ENCODE measurements at regions of chr19 and their contacts with region 1.

Region 1: DNA sequence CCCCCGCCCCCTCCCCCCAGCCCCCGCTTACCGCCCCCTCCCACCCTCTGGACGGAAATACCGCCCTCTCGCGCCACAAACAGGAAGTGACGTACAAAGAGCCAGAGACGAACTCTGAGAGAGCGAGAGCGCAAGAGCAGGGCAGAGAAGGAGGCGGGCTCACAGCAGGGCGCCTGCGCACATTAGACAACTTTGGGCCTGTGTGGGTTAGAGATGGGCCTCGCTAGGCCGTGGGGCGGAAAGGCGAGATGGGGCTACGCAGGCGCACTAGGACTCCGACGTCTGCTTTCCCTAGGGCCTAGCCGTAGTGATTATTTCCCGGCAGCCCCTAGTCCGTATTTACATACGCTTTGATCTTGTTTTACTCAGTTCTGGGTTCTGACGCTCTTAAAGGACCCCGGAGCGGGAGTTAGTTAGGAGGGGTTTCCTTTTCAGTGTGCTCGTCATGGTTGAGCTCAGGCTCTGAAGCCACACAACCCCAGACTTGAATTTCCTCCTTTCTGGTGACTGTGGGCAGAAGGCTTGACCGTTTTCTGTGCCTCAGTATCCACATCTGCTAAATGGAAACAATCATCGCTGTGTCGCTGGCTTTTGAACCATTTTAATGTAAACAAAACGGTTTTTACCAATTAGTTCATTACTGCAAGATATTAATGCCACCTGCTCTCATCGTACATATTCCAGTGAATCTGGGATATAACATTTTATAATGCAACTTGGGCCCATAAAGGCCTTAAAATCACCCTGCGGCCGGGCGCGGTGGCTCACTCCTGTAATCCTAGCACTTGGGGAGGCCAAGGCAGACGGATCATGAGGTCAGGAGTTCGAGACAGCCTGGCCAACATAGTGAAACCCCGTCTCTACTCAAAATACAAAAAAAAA is 449 bp upstream of the AKT2 start:
- DNase-seq: peak; percentile 99
- ATAC-seq: peak; percentile 84
- H3K4me3 Mint-ChIP-seq: peak overlapping the region; percentile 98
- H3K27ac Mint-ChIP-seq: peak overlapping the region; percentile 99
- H3K4me1 Mint-ChIP-seq: peaks cover 43% of the 10 kb centered on the region
- H3K27me3 Mint-ChIP-seq: no peaks in the 10 kb centered on the region
- CTCF ChIP-seq: no peak

Region 2: DNA sequence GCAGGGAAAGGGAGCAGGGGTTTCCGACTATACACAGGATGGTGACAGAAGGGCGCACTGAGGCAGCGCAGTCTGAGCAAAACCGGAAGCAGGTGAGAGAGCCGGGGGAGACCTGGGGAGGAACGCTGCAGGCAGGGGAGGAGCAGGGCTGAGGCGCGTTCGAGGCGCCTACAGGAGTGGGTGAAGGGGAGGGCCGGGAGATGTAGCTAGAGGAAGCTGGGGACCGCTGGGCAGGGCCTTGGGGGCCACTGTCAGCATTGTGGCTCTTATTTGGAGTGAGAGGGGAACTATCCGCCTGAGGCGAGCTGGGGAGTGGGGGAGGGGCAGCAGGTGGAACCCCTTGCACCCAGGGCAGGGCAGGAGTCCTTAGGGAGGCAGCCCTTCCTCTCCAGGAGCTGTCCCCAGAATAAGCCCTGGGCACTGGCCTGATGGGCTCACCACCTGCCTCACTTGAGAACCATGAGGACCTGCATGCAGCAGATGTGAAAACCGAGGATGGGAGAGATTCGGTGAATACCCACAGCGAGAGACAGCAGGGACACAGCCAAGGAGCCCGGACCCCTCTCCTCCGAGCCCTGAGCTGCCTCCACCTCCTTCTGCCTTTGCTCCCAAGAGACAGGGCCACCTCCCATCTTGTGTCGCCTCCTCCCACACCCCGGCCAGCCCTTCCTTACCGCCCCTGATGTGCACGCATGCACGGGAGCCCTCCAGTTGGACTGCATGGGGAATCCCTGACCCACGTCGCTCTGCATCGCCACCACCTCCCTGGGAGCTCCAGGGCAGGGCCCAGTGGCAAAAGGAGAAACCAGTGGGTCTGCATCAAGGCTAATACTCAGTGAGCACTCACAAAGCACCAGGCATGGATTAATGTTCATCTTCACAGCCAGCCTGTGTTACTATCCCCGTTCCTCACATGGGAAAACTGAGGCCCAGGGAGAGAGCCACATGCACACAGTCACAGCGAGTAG is 10.7 kb before region 1 on chr19:
- CTCF ChIA-PET with region 1: interaction called, 3 read pairs
- POLR2A ChIA-PET with region 1: interaction called, 13 read pairs
- intact Hi-C with region 1: no loop called
- DNase-seq: peak; percentile 69
- ATAC-seq: peak; percentile 93
- H3K4me3 Mint-ChIP-seq: peak overlapping the region; percentile 41
- H3K27ac Mint-ChIP-seq: peak overlapping the region; percentile 77
- H3K4me1 Mint-ChIP-seq: peaks cover 66% of the 10 kb centered on the region
- H3K27me3 Mint-ChIP-seq: no peaks in the 10 kb centered on the region
- CTCF ChIP-seq: no peak

Region 3: GRCh38 chr19:40312533-40312932 is 26.9 kb after region 1 on chr19:
- CTCF ChIA-PET with region 1: no interaction called
- POLR2A ChIA-PET with region 1: no interaction called
- intact Hi-C with region 1: no loop called
- DNase-seq: peak; percentile 4
- ATAC-seq: no peak
- H3K4me3 Mint-ChIP-seq: no peak overlapping the region
- H3K27ac Mint-ChIP-seq: no peak overlapping the region
- H3K4me1 Mint-ChIP-seq: peaks cover 3% of the 10 kb centered on the region
- H3K27me3 Mint-ChIP-seq: no peaks in the 10 kb centered on the region
- CTCF ChIP-seq: no peak

Measured in activated CD8-positive, alpha-beta T cell treated with anti-CD3 and anti-CD28 coated beads for 36 hours (primary cell).